ENCODE measurements at regions of chr2 and their contacts with region 1.

Region 1: DNA sequence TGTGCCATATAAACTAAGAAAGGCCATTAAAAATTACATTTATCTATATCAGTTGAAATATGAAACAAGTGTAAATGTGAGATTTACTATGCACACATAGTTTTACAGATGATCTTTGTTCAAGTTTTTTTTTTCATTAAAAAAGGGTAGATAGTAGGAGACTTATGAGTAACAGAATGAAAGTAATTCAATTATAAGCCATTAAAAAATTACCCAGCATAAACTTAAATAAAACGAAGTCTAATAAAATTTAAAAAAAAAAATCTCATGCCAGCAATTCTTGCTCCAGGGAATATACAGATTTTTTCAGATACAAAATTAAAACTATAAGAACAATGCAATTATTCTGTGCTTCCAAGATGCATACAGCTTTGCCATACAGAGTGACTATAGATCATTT is 118.3 kb upstream of the RNU4ATAC start:
- DNase-seq: no peak
- H3K4me3 Mint-ChIP-seq: no peak overlapping the region
- H3K27ac Mint-ChIP-seq: no peak overlapping the region
- H3K4me1 Mint-ChIP-seq: no peaks in the 10 kb centered on the region
- H3K27me3 Mint-ChIP-seq: no peaks in the 10 kb centered on the region
- CTCF ChIP-seq: no peak

Region 2: GRCh38 chr2:121260370-121261154 is 151.8 kb before region 1 on chr2:
- CTCF ChIA-PET with region 1: no interaction called
- intact Hi-C with region 1: no loop called
- DNase-seq: no peak
- H3K4me3 Mint-ChIP-seq: no peak overlapping the region
- H3K27ac Mint-ChIP-seq: no peak overlapping the region
- H3K4me1 Mint-ChIP-seq: peaks cover 65% of the 10 kb centered on the region
- H3K27me3 Mint-ChIP-seq: no peaks in the 10 kb centered on the region
- CTCF ChIP-seq: no peak

Region 3: GRCh38 chr2:121427187-121427689 is 14.9 kb after region 1 on chr2:
- CTCF ChIA-PET with region 1: no interaction called
- intact Hi-C with region 1: loop called (anchors 1 kb)
- DNase-seq: no peak
- H3K4me3 Mint-ChIP-seq: no peak overlapping the region
- H3K27ac Mint-ChIP-seq: no peak overlapping the region
- H3K4me1 Mint-ChIP-seq: no peaks in the 10 kb centered on the region
- H3K27me3 Mint-ChIP-seq: no peaks in the 10 kb centered on the region
- CTCF ChIP-seq: no peak